ENCODE measurements at regions of chr11 and their contacts with region 1.

Region 1: DNA sequence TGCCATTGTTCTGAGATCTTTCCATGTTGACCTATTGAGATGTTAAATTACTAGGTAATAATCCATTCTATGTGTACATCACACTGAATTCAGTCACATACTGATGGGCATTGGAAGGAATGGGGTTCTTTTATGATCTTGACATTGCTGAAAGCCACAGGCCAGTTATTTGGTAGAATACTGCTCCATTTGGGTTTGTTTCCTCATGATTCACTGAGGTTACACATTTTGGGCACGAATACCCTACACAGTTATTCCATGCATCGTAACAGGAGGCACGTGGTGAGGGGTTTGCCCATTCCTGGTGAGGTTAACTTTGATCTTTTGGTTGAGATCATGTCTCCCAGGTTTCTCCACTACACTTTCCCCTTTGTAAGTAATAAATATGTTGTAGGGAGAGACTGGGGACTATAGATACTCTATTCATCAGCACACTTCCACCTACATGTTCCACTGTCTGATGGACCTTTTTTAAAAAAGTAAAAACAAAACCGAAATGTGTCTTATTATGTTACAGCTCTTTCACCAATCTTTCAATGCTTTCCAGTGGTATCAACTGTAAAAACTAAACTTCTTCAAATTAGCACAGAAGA is 12.0 kb upstream of the FOLR1 start:
- DNase-seq: no peak
- H3K4me3 ChIP-seq: no peak overlapping the region
- H3K27ac ChIP-seq: no peak overlapping the region
- H3K4me1 ChIP-seq: no peaks in the 10 kb centered on the region
- H3K27me3 ChIP-seq: no peaks in the 10 kb centered on the region
- CTCF ChIP-seq: no peak

Region 2: DNA sequence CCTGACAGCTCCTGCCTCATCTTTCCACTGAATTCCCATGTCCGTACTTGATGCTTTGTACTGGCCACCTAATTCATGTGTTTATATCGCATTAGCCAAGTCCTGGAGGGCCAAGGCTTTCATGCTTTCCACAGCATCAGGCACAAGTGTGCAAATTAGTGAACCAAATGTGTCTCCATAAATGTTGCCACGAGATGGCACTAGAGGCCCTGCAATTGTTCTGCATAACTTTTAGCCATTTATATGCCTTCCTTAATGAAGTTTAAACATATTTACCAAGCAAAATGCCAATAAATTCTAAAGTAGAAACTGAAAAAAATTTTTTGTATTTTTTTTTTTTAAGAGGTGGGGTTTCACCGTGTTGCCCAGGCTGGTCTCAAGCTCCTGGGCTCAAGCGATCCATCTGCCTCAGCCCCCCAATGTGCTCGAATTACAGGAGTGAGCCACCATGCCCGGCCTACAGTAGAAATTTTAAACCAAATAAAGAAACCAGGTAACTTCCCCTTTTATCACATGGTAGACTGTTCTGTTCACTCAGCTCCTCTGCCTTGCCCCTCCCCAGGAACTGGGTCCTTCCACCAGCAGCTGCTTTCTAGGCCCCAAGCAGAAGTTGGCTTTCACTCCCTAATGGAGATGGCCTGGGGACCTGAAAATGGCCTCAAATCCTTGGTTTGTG is 202.0 kb before region 1 on chr11:
- CTCF ChIA-PET with region 1: no interaction called
- POLR2A ChIA-PET with region 1: no interaction called
- intact Hi-C with region 1: loop called (anchors 5 kb)
- DNase-seq: peak; percentile 74
- H3K4me3 ChIP-seq: no peak overlapping the region
- H3K27ac ChIP-seq: no peak overlapping the region
- H3K4me1 ChIP-seq: no peaks in the 10 kb centered on the region
- H3K27me3 ChIP-seq: no peaks in the 10 kb centered on the region
- CTCF ChIP-seq: peak; percentile 90

Region 3: GRCh38 chr11:72030472-72031045 is 149.3 kb before region 1 on chr11:
- CTCF ChIA-PET with region 1: interaction called, 7 read pairs
- POLR2A ChIA-PET with region 1: no interaction called
- intact Hi-C with region 1: loop called (anchors 1 kb)
- DNase-seq: no peak
- H3K4me3 ChIP-seq: no peak overlapping the region
- H3K27ac ChIP-seq: no peak overlapping the region
- H3K4me1 ChIP-seq: peaks cover 15% of the 10 kb centered on the region
- H3K27me3 ChIP-seq: no peaks in the 10 kb centered on the region
- CTCF ChIP-seq: no peak

Region 4: DNA sequence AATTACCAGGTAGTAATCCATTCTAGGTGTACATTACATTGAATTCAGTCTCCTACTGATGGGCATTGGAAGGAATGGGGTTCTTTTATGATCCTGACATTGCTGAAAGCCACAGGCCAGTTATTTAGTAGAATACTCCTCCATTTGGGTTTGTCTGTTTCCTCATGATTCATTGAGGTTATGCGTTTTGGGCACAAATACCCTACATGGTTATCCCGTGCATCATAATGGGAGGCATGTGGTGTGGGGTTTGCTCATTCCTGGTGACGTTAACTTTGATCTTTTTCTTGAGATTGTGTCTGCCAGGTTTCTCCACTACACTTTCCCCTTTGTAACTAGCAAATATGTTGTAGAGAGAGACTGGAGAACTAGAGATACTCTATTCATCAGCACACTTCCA is 38.8 kb before region 1 on chr11:
- CTCF ChIA-PET with region 1: interaction called, 3 read pairs
- POLR2A ChIA-PET with region 1: interaction called, 5 read pairs
- intact Hi-C with region 1: loop called (anchors 2 kb)
- DNase-seq: no peak
- H3K4me3 ChIP-seq: no peak overlapping the region
- H3K27ac ChIP-seq: no peak overlapping the region
- H3K4me1 ChIP-seq: no peaks in the 10 kb centered on the region
- H3K27me3 ChIP-seq: no peaks in the 10 kb centered on the region
- CTCF ChIP-seq: no peak

Region 5: GRCh38 chr11:72160319-72160718 is 19.6 kb before region 1 on chr11:
- CTCF ChIA-PET with region 1: interaction called, 3 read pairs
- POLR2A ChIA-PET with region 1: interaction called, 10 read pairs
- intact Hi-C with region 1: no loop called
- DNase-seq: no peak
- H3K4me3 ChIP-seq: no peak overlapping the region
- H3K27ac ChIP-seq: no peak overlapping the region
- H3K4me1 ChIP-seq: no peaks in the 10 kb centered on the region
- H3K27me3 ChIP-seq: peaks cover 3% of the 10 kb centered on the region
- CTCF ChIP-seq: no peak

Region 6: GRCh38 chr11:72191961-72192381 is 12.1 kb after region 1 on chr11 and contains the start of gene FOLR1:
- CTCF ChIA-PET with region 1: no interaction called
- POLR2A ChIA-PET with region 1: no interaction called
- intact Hi-C with region 1: no loop called
- DNase-seq: no peak
- H3K4me3 ChIP-seq: no peak within 1 kb of the TSS
- H3K27ac ChIP-seq: no peak within 1 kb of the TSS
- H3K4me1 ChIP-seq: no peaks in the 10 kb centered on the region
- H3K27me3 ChIP-seq: no peaks in the 10 kb centered on the region
- CTCF ChIP-seq: no peak
- total RNA-seq, gene FOLR1: not detected in 2 replicates